ENCODE measurements at regions of chr6 and their contacts with region 1.

Region 1: GRCh38 chr6:142885182-142885867 is 59.7 kb downstream of the HIVEP2 start:
- DNase-seq: peak; percentile 55
- ATAC-seq: peak; percentile 82
- H3K4me3 Mint-ChIP-seq: peak overlapping the region; percentile 76
- H3K27ac Mint-ChIP-seq: peak overlapping the region; percentile 99
- H3K4me1 Mint-ChIP-seq: peaks cover 88% of the 10 kb centered on the region
- H3K27me3 Mint-ChIP-seq: no peaks in the 10 kb centered on the region

Region 2: DNA sequence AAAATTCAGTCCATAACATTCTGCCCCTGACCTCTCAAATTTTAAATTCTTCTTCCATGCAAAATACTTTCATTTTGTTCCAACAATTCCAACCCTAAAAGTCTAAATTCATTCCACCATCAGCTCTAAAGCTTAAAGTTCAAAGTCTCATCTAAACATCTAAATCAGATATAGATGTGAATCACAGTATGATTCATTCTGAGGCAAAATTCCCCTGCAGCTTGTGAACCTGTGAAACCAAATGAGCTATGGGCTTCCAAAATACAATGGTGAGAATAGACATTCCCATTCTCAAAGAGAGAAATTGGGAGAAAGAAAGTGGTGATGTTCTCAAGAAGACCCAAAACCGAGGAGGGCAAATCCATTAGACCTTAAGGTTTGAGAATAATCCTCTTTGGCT is 250.2 kb before region 1 on chr6:
- CTCF ChIA-PET with region 1: no interaction called
- POLR2A ChIA-PET with region 1: no interaction called
- intact Hi-C with region 1: no loop called
- DNase-seq: no peak
- ATAC-seq: no peak
- H3K4me3 Mint-ChIP-seq: no peak overlapping the region
- H3K27ac Mint-ChIP-seq: no peak overlapping the region
- H3K4me1 Mint-ChIP-seq: peaks cover 21% of the 10 kb centered on the region
- H3K27me3 Mint-ChIP-seq: no peaks in the 10 kb centered on the region

Region 3: GRCh38 chr6:142850679-142851423 is 34.5 kb before region 1 on chr6:
- CTCF ChIA-PET with region 1: interaction called, 6 read pairs
- POLR2A ChIA-PET with region 1: interaction called, 5 read pairs
- intact Hi-C with region 1: loop called (anchors 1 to 2 kb)
- DNase-seq: peak; percentile 66
- ATAC-seq: peak; percentile 67
- H3K4me3 Mint-ChIP-seq: peak overlapping the region; percentile 37
- H3K27ac Mint-ChIP-seq: peak overlapping the region; percentile 86
- H3K4me1 Mint-ChIP-seq: peaks cover 95% of the 10 kb centered on the region
- H3K27me3 Mint-ChIP-seq: no peaks in the 10 kb centered on the region

Region 4: DNA sequence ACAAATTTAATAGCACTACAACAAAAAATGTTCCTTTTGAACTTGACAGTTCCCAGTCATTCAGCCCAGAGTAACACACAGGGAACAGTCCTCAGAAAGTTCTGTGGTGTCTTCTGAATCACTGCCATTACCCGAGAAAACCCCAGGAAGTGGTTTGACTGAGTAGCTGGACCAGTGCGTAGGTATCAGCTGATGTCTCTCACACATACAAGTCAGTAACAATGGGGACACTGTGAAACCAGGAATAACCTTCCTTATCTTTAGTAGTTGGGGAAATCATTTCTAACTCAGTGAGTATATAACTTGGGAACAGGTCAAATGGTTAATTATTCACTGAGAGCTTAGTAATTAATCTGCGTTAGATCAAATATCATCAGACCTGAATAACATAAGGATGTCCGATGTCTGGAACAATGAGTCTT is 13.4 kb before region 1 on chr6:
- CTCF ChIA-PET with region 1: interaction called, 15 read pairs
- POLR2A ChIA-PET with region 1: interaction called, 5 read pairs
- intact Hi-C with region 1: loop called (anchors 1 kb)
- DNase-seq: peak; percentile 72
- ATAC-seq: peak; percentile 93
- H3K4me3 Mint-ChIP-seq: peak overlapping the region; percentile 42
- H3K27ac Mint-ChIP-seq: peak overlapping the region; percentile 91
- H3K4me1 Mint-ChIP-seq: peaks cover 86% of the 10 kb centered on the region
- H3K27me3 Mint-ChIP-seq: no peaks in the 10 kb centered on the region

Region 5: DNA sequence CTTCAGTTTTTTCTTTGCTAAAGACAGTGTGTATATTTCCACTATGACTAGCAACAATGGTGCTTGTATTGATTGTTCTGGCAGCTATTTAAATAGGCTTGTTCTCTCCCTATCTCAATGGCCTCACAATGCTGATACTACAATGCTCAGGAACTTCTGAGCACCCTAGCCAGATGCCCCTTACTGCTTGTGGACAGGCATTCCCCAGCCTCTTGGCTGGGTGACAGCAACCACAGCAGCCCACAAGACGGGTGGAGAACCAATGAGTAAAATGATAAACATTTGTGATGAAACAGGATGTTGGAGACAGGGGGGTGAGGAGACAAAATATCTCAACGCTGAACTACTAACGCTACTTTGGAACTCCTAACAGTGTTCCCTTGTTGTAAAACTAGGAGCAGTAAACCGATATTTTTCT is 17.3 kb after region 1 on chr6:
- CTCF ChIA-PET with region 1: interaction called, 15 read pairs
- POLR2A ChIA-PET with region 1: interaction called, 3 read pairs
- intact Hi-C with region 1: loop called (anchors 1 kb)
- DNase-seq: peak; percentile 84
- ATAC-seq: peak; percentile 56
- H3K4me3 Mint-ChIP-seq: peak overlapping the region; percentile 65
- H3K27ac Mint-ChIP-seq: peak overlapping the region; percentile 94
- H3K4me1 Mint-ChIP-seq: peaks cover 64% of the 10 kb centered on the region
- H3K27me3 Mint-ChIP-seq: no peaks in the 10 kb centered on the region

Region 6: DNA sequence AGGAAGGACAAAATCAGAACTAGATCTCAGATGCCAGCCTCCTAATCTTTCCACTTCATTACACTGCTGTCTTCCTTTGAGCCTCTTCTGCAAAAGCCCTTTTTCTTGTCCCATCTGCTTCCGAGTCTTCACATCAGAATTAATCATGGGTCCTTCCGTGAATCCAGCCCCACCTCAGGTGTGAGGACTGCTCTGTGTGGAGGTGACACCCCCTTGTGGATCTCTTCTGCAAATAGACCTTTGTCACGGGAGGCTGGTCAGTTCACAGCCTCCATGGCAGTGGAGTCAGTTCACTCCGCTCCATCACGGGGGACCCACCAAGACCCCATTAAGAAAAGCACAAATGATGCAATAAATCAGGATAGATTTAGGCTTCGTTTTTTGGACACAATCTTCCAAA is 394.1 kb after region 1 on chr6:
- CTCF ChIA-PET with region 1: no interaction called
- POLR2A ChIA-PET with region 1: no interaction called
- intact Hi-C with region 1: no loop called
- DNase-seq: peak; percentile 17
- ATAC-seq: no peak
- H3K4me3 Mint-ChIP-seq: no peak overlapping the region
- H3K27ac Mint-ChIP-seq: no peak overlapping the region
- H3K4me1 Mint-ChIP-seq: peaks cover 3% of the 10 kb centered on the region
- H3K27me3 Mint-ChIP-seq: no peaks in the 10 kb centered on the region

Region 7: GRCh38 chr6:144104898-144105487 is 1219.7 kb after region 1 on chr6:
- CTCF ChIA-PET with region 1: no interaction called
- POLR2A ChIA-PET with region 1: no interaction called
- intact Hi-C with region 1: no loop called
- DNase-seq: peak; percentile 30
- ATAC-seq: peak; percentile 78
- H3K4me3 Mint-ChIP-seq: no peak overlapping the region
- H3K27ac Mint-ChIP-seq: no peak overlapping the region
- H3K4me1 Mint-ChIP-seq: peaks cover 8% of the 10 kb centered on the region
- H3K27me3 Mint-ChIP-seq: no peaks in the 10 kb centered on the region